Panc1 (cell line): ENCODE measurements at regions of chr10 and their contacts with region 1.

Region 1: DNA sequence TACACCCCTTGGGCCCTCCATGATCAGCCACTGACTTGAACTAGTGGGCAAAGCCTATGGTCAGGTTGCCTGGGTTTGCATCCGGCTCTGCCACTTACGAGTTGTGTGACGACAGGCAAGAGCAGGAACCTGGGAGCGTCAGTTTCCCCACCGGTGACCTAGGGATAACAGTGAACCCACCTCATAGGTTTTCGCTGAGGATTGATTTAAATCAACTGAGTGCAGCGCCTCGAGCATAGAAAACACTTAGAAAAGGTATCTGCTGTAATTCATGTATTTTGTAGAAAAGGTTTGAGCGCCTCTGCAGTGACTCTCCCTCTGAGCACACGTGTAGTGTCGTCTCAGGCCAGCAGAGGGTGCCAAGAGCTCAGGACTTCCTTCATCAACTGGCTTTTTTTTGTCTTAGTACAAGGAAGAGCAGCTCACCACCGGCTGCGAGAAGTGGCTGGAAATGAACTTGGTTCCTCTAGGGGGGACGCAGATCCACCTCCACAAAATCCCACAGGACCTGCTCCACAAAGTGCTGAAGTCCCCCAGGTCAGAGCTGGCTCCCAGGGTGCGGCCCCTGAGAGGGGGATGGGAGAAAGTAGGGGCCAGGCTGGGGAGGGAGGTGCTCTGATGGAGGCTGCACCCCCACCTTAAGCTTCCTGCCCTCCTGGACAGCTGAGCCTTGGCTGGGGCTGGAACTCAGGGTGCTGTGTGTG is 27.7 kb downstream of the BTBD16 start:
- DNase-seq: peak; percentile 80
- ATAC-seq: peak; percentile 90
- H3K4me3 ChIP-seq: peak overlapping the region; percentile 18 to 24
- H3K27ac ChIP-seq: peak overlapping the region; percentile 76
- H3K4me1 ChIP-seq: peaks cover 17% of the 10 kb centered on the region
- H3K27me3 ChIP-seq: no peaks in the 10 kb centered on the region
- CTCF ChIP-seq: peak; percentile 96

Region 2: DNA sequence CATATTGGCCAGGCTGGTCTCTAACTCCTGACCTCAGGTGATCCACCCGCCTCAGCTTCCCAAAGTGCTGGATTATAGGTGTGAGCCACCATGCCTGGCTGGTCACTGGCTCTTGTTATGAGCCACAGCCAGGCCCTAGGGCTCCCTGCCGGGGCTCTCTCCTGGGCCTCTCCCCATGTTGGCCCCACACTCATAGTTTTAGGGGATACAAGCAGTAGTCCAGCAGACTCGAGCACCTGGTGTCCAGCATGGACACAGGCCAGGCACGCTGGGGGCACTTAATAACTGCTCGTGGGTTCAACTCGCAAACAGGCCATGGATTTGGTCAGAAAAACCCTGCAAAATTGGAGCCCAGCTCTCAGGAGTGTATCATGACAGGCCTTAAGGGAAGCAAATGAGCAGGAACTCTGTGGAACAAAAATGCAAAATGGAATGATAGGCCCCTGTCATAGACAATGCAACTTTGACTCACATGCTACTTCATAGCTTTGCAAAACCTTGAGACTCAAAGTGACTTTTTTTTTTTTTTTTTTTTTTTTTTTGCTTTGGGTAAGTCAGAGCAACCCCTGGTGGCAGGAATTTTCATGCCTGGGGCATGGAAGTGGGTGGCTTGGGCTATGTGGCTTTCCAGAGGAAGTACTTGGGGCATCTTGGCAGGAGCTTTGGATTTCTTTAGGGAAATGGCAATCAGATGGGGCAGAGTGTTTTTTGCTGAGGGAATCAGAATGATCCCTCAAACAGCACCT is 247.3 kb before region 1 on chr10:
- CTCF ChIA-PET with region 1: no interaction called
- POLR2A ChIA-PET with region 1: no interaction called
- in situ Hi-C with region 1: no loop called
- intact Hi-C with region 1: no loop called
- DNase-seq: no peak
- ATAC-seq: peak; percentile 67
- H3K4me3 ChIP-seq: no peak overlapping the region
- H3K27ac ChIP-seq: peak overlapping the region; percentile 80; the same call in 1 of the 2 replicates
- H3K4me1 ChIP-seq: peaks cover 14% of the 10 kb centered on the region
- H3K27me3 ChIP-seq: no peaks in the 10 kb centered on the region
- CTCF ChIP-seq: peak; percentile 89

Region 3: GRCh38 chr10:122163174-122164022 is 135.4 kb before region 1 on chr10:
- CTCF ChIA-PET with region 1: no interaction called
- POLR2A ChIA-PET with region 1: no interaction called
- in situ Hi-C with region 1: no loop called
- intact Hi-C with region 1: no loop called
- DNase-seq: no peak
- ATAC-seq: no peak
- H3K4me3 ChIP-seq: peak overlapping the region in 1 of 2 experiments; percentile 29; a peak in 1 of 4 replicates
- H3K27ac ChIP-seq: no peak overlapping the region
- H3K4me1 ChIP-seq: no peaks in the 10 kb centered on the region; the same call in 1 of the 2 replicates
- H3K27me3 ChIP-seq: no peaks in the 10 kb centered on the region
- CTCF ChIP-seq: no peak

Region 4: GRCh38 chr10:122199070-122199469 is 99.7 kb before region 1 on chr10:
- CTCF ChIA-PET with region 1: no interaction called
- POLR2A ChIA-PET with region 1: no interaction called
- in situ Hi-C with region 1: no loop called
- intact Hi-C with region 1: no loop called
- DNase-seq: no peak
- ATAC-seq: peak; percentile 27
- H3K4me3 ChIP-seq: no peak overlapping the region
- H3K27ac ChIP-seq: no peak overlapping the region
- H3K4me1 ChIP-seq: no peaks in the 10 kb centered on the region
- H3K27me3 ChIP-seq: no peaks in the 10 kb centered on the region
- CTCF ChIP-seq: no peak

Region 5: DNA sequence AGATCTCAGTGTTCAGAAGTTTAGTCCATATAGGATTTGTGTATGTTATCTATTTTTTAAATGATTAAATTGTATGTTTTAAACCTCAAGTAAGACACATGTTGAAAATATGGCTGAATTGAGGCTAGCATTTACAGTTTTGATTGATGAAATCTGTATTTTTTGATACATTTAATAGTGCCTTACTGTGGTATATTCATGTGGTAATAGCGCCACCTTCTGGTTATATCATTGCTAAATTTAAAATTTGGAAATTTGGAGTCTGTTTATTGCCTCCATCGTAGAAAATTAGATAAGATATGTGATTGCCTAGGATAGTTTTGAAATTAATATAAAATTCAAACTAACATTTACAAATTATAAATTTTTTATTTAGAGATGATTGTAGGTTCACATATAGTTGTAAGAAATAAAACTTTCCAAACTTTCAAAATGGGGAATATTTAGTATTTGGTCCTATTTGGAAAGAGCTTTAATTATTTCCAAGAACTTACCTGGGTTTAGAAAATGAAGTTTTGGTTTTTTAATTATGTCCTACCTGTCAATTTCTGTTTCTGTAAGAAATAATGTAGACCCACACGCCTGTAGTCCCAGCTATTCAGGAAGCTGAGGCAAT is 136.6 kb after region 1 on chr10:
- CTCF ChIA-PET with region 1: interaction called, 28 read pairs
- POLR2A ChIA-PET with region 1: no interaction called
- in situ Hi-C with region 1: no loop called
- intact Hi-C with region 1: loop called (anchors 1 kb)
- DNase-seq: peak; percentile 18
- ATAC-seq: peak; percentile 78
- H3K4me3 ChIP-seq: no peak overlapping the region
- H3K27ac ChIP-seq: no peak overlapping the region
- H3K4me1 ChIP-seq: no peaks in the 10 kb centered on the region
- H3K27me3 ChIP-seq: no peaks in the 10 kb centered on the region
- CTCF ChIP-seq: peak; percentile 66; the same call in 1 of the 2 replicates